Lower lobe of right lung (tissue), 2 donors: ENCODE measurements at regions of chr2 and their contacts with region 1.

Region 1: DNA sequence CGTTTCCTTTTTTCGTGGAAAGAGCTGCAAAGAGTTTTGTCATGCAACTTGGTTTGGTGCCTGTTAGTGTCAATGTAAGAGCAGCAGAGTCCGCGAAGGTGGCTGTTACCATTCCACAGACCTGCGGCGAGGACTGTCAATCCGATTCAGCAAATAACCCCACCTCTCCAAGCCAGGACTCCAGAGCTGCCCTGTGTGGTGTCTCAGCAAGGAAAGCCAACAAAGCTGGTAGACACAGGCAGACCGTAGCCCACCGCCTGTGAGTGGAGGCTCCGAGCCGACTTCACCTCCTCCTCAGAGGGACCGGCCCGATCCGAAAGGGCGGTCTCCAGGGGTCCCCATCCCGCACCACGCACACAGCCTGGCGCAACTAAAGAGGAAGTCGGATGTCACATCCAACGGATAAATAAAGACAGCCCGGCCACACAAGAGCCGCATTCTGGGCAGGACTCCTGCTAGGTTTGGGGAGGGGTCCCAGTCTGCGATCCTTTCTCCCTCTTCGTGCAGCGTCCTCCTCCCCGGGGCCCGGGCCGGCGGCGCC is 819 bp downstream of the ANKRD44 start:
- DNase-seq: peak; percentile 63
- ATAC-seq: peak; percentile 5 to 21
- H3K4me3 ChIP-seq: peak overlapping the region; percentile 76
- H3K27ac ChIP-seq: peak overlapping the region; percentile 91
- H3K4me1 ChIP-seq: peaks cover 52% of the 10 kb centered on the region
- H3K27me3 ChIP-seq: no peaks in the 10 kb centered on the region
- CTCF ChIP-seq: no peak

Region 2: GRCh38 chr2:197198890-197199289 is 110.9 kb before region 1 on chr2:
- intact Hi-C with region 1: loop called (anchors 5 kb)
- DNase-seq: peak; percentile 63
- ATAC-seq: peak; percentile 80
- H3K4me3 ChIP-seq: peak overlapping the region; percentile 33
- H3K27ac ChIP-seq: peak overlapping the region; percentile 8
- H3K4me1 ChIP-seq: peaks cover 71% of the 10 kb centered on the region
- H3K27me3 ChIP-seq: no peaks in the 10 kb centered on the region
- CTCF ChIP-seq: no peak